ENCODE measurements at regions of chr11 and their contacts with region 1.

Region 1: DNA sequence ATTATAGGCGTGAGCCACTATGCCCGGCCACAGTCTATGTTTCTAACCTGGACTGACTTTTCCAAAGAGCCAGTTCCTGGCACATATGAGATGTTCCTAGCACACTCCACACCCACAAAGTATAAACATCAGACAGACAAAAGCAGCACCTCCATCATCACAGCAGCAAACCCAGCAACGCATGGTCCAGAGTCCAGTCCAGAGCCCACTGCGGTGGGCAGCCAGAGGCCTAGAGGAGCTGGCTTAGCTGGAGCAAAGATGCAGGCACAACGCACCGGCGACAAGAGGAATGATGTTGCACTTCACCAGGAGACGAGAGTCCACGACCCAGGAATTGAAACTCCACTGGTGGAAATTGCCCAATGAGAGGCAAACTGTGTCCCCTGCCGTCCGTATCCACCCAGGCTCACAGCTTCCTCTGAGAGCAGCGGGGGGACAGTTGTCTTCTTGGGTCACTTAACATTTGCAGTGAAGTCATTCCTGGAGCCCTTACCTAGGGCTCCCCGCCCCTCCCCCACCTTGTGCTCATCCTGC is 36.6 kb downstream of the RPS6KA4 start:
- DNase-seq: no peak

Region 2: GRCh38 chr11:64440496-64440895 is 44.9 kb after region 1 on chr11:
- intact Hi-C with region 1: loop called in 1 of 2 experiments (anchors 1 kb)
- DNase-seq: peak; percentile 16

Measured in posterior vena cava (tissue), 2 donors.